Dendritic cell treated with granulocyte-macrophage colony-stimulating factor and Interleukin-4, amounts not matched to agents 40 ng/mL and 50 ng/mL, for 4 days (primary cell): ENCODE measurements at regions of chr6 and their contacts with region 1.

Region 1: GRCh38 chr6:8063761-8064637 is at the start of gene BLOC1S5:
- H3K4me3 Mint-ChIP-seq: peak within 1 kb of the TSS; percentile 87
- H3K27ac Mint-ChIP-seq: peak within 1 kb of the TSS; percentile 93
- H3K4me1 Mint-ChIP-seq: peaks cover 13% of the 10 kb centered on the region
- H3K27me3 Mint-ChIP-seq: no peaks in the 10 kb centered on the region

Region 2: DNA sequence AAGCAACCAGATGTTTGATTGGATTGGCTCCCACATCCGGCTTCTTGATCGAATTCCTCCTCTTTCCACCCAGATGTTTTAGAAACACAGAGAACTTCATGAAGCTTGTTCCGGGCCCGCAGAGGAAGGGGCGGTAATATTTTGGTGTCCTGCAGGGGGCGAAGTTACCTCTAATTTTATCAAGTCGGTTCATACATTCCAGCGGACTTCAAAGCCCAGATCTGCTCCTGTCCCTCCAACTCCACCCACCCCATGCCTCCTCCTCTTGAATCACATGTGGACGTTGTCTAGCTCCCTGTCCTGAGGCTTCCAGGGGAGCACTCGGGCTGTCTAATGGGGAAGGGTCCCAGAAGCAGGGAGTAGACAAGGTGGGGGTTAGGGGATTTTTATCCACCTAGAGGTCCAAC is 341.0 kb before region 1 on chr6:
- intact Hi-C with region 1: loop called (anchors 5 kb)
- H3K4me3 Mint-ChIP-seq: no peak overlapping the region
- H3K27ac Mint-ChIP-seq: no peak overlapping the region
- H3K4me1 Mint-ChIP-seq: peaks cover 24% of the 10 kb centered on the region
- H3K27me3 Mint-ChIP-seq: peaks cover 59% of the 10 kb centered on the region

Region 3: GRCh38 chr6:7909323-7910276 is 154.4 kb before region 1 on chr6:
- intact Hi-C with region 1: loop called (anchors 5 kb)
- H3K4me3 Mint-ChIP-seq: peak overlapping the region; percentile 85
- H3K27ac Mint-ChIP-seq: peak overlapping the region; percentile 79
- H3K4me1 Mint-ChIP-seq: peaks cover 19% of the 10 kb centered on the region
- H3K27me3 Mint-ChIP-seq: peaks cover 3% of the 10 kb centered on the region

Region 4: DNA sequence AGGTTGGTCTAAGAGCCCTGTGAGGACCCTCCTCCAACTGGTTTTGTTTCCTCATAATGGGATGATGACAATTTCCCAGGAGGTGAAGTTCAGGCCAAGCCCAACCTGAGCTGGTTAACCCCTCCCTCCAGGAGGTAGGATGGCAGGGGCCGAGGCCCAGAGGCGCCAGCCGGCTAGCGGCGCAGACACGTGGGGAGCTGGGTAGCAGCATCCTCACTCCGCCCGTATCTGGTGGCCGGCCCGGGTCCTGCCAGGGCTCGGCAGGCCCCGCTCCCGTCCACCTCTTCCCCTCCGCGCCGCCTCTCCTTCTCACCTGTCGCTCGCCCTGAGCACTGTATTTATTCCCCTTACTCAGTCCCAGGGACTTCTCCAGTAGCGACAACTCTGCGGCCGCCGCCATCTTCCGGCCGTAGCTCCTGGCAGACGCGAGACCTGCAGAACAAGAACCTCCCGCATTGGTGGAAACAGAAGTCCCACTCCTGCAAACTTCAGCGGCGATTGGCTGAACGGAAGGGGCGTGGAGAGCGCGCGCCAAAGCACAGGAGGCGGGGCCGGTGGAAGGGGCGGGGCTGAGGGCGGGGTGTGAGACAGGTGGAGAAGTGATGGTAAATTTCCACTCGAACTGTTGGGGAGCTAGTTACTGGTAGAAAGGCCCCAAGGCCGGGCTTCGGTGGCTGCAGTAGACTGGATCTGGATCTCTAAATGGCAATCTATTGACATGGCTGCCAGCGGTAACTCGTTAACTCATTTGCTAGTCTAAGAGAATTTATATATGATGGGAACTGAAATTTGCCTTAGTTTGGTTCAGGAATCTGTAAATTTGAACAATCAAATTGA is 38.3 kb after region 1 on chr6 and contains the start of gene EEF1E1:
- intact Hi-C with region 1: loop called (anchors 1 kb)
- H3K4me3 Mint-ChIP-seq: peak within 1 kb of the TSS; percentile 96
- H3K27ac Mint-ChIP-seq: peak within 1 kb of the TSS; percentile 79
- H3K4me1 Mint-ChIP-seq: peaks cover 20% of the 10 kb centered on the region
- H3K27me3 Mint-ChIP-seq: peaks cover 1% of the 10 kb centered on the region

Region 5: DNA sequence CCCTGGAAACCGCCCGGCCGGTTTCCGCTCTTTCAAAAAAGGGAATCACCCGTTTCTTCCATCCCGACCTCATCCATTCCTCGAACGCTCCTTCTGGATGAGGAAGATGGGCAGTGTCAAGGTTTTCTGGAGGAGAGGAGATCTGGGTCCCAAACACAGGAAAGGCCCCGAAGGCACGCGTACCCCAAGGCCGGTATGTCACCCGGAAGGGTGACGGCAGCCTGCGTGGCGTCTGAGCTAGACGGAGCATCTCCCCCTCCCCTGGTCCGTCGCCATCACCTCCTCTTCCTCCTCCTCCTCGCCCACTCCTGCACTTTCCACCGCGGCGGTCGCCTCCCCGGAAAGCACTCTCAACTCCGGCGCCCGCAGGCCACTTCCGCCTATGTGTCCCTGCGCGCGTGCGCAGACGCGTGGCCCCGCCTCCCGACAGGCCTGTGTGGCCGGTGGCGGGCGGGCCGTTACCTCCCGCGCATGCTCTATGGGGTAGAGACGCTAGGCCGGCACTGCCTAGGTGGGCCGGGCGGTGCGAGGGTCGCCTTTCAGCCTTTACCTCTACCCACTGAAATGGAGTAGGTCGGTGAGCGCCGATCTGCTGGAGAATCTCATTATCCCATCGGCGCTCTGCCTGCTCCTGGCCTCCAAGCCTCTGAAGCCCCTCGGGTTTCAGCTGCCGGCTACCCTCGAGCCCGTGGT is 371.3 kb after region 1 on chr6 and contains the start of gene SLC35B3:
- intact Hi-C with region 1: loop called (anchors 10 kb)
- H3K4me3 Mint-ChIP-seq: peak within 1 kb of the TSS; percentile 92
- H3K27ac Mint-ChIP-seq: peak within 1 kb of the TSS; percentile 97
- H3K4me1 Mint-ChIP-seq: peaks cover 28% of the 10 kb centered on the region
- H3K27me3 Mint-ChIP-seq: peaks cover 3% of the 10 kb centered on the region